Tibial artery (tissue), 4 donors: ENCODE measurements at regions of chr3 and their contacts with region 1.

Region 1: GRCh38 chr3:143693506-143693905 is 154.8 kb downstream of the SLC9A9 start:
- DNase-seq: no peak
- H3K4me3 ChIP-seq: no peak overlapping the region
- H3K27ac ChIP-seq: no peak overlapping the region
- H3K4me1 ChIP-seq: no peaks in the 10 kb centered on the region
- H3K27me3 ChIP-seq: no peaks in the 10 kb centered on the region
- CTCF ChIP-seq: no peak

Region 2: DNA sequence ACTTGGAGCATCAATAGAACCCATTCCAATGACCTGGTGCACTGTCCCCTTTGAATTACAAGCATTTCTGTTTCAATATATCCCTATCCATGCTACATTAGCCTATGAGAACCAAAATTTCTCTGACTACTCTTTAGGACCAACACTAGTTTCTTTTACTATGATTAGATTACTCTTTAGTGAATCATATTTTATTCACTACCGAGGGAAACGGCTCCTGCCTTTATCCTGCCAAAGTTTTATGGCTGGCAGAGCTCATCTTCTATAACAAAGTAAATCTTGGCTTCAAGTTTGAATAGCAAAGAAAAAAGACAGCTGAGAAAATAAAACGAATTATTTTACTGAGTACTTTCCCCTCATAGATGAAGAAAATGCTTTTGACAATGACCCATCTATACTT is 33.9 kb after region 1 on chr3:
- intact Hi-C with region 1: loop called (anchors 1 kb)
- DNase-seq: no peak
- H3K4me3 ChIP-seq: no peak overlapping the region
- H3K27ac ChIP-seq: no peak overlapping the region
- H3K4me1 ChIP-seq: no peaks in the 10 kb centered on the region
- H3K27me3 ChIP-seq: no peaks in the 10 kb centered on the region
- CTCF ChIP-seq: no peak